Vagina (tissue), 2 donors: ENCODE measurements at regions of chr20 and their contacts with region 1.

Region 1: DNA sequence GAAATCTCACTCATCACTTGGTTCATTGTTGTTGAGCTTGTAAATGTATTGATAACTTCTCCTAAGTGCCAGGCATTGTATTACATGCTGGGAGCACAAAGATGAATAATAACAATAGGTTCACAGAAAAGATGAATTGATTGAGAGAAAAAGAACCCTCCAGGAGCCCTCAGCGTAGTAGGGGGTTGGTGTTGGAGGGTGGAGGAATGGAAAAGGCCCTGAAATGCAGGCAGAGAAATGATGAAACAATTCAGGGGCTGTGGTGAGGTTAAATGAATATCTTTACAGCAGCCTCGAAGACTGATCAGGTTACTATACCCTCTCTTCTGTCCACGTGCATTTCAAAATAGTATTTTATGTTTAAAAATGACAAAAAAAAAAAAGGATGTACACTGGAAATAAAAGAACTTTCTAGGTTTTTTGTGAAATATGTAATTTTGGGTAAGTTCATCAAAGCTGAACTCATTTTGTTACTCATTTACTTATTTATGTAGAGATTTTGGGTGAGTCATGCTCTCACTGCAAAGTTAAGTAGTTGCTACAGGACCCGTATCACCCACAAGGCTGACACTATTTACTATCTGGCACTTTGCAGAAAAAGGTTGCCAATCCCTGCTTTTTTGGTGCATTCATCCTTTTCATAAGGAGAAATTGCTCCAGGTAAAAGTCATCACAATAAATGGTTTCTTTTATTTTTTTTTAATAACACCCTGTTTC is 277.3 kb downstream of the ZNF217 start:
- DNase-seq: no peak
- H3K4me3 ChIP-seq: no peak overlapping the region
- H3K27ac ChIP-seq: no peak overlapping the region
- H3K4me1 ChIP-seq: no peaks in the 10 kb centered on the region
- H3K27me3 ChIP-seq: no peaks in the 10 kb centered on the region
- CTCF ChIP-seq: no peak
- POLR2A ChIP-seq: no peak

Region 2: DNA sequence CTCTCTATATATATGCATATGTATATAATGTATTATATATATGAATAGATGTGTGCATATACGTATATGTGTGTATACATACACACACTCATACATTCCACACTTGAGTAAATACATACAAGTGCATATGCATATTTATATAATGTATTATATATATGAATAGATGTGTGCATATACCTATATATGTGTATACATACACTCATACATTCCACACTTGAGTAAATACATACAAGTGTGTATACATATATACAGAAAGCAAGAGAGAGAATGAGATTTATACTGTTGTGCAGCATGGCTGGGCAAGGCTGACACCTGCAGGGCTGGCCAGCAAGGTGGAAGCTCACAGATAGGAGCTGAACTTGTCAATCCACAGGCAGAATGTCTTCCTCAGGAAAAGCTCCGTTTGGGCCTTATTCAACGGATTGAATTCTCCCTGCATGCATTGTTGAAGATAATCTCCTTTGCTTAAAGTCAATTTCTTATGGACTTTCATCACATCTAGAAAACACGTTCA is 20.5 kb after region 1 on chr20:
- intact Hi-C with region 1: loop called (anchors 1 kb)
- DNase-seq: no peak
- H3K4me3 ChIP-seq: no peak overlapping the region
- H3K27ac ChIP-seq: no peak overlapping the region
- H3K4me1 ChIP-seq: no peaks in the 10 kb centered on the region
- H3K27me3 ChIP-seq: no peaks in the 10 kb centered on the region
- CTCF ChIP-seq: no peak
- POLR2A ChIP-seq: no peak